ENCODE measurements at regions of chr5 and their contacts with region 1.

Region 1: GRCh38 chr5:75566710-75567309 is 44.4 kb upstream of the ANKDD1B start:
- DNase-seq: peak; percentile 84
- H3K4me3 Mint-ChIP-seq: peak overlapping the region; percentile 48
- H3K27ac Mint-ChIP-seq: peak overlapping the region; percentile 95
- H3K4me1 Mint-ChIP-seq: peaks cover 55% of the 10 kb centered on the region
- H3K27me3 Mint-ChIP-seq: no peaks in the 10 kb centered on the region

Region 2: DNA sequence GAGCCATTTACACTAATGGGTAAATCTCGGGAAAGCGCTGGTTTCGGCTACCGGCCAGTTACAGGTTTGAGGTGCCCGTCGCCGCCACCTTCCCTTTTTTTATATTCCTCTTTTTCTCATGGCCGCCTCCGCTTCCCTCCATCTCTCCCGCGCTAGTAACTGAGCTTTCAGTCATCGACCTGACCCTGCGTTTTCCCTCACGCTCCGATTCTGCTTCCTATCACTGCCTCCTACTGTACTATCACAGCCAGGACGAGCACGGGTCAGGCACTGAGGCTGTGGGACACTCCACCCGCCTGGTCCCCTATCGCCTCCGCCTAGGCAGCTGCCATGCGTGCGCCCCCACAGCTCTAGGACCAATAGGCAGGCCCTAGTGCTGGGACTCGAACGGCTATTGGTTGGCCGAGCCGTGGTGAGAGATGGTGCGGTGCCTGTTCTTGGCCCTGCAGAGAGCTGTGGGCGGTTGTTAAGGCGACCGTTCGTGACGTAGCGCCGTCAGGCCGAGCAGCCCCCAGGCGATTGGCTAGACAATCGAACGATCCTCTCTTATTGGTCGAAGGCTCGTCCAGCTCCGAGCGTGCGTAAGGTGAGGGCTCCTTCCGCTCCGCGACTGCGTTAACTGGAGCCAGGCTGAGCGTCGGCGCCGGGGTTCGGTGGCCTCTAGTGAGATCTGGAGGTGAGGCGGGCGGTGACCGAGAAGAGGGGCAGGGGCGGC is 230.0 kb before region 1 on chr5 and contains the start of gene HMGCR:
- CTCF ChIA-PET with region 1: no interaction called
- intact Hi-C with region 1: loop called (anchors 1 kb)
- DNase-seq: peak; percentile 99
- H3K4me3 Mint-ChIP-seq: no peak within 1 kb of the TSS
- H3K27ac Mint-ChIP-seq: no peak within 1 kb of the TSS
- H3K4me1 Mint-ChIP-seq: peaks cover 35% of the 10 kb centered on the region
- H3K27me3 Mint-ChIP-seq: no peaks in the 10 kb centered on the region
- total RNA-seq, gene HMGCR: 61.7 to 67.5 TPM

Region 3: GRCh38 chr5:75460942-75461610 is 105.7 kb before region 1 on chr5:
- CTCF ChIA-PET with region 1: no interaction called
- intact Hi-C with region 1: loop called (anchors 1 kb)
- DNase-seq: no peak
- H3K4me3 Mint-ChIP-seq: no peak overlapping the region
- H3K27ac Mint-ChIP-seq: no peak overlapping the region
- H3K4me1 Mint-ChIP-seq: peaks cover 33% of the 10 kb centered on the region
- H3K27me3 Mint-ChIP-seq: no peaks in the 10 kb centered on the region

Region 4: GRCh38 chr5:75668977-75669689 is 102.3 kb after region 1 on chr5:
- CTCF ChIA-PET with region 1: interaction called, 4 read pairs
- intact Hi-C with region 1: loop called (anchors 1 kb)
- DNase-seq: peak; percentile 82
- H3K4me3 Mint-ChIP-seq: peak overlapping the region; percentile 49
- H3K27ac Mint-ChIP-seq: peak overlapping the region; percentile 70
- H3K4me1 Mint-ChIP-seq: peaks cover 30% of the 10 kb centered on the region
- H3K27me3 Mint-ChIP-seq: no peaks in the 10 kb centered on the region

Region 5: DNA sequence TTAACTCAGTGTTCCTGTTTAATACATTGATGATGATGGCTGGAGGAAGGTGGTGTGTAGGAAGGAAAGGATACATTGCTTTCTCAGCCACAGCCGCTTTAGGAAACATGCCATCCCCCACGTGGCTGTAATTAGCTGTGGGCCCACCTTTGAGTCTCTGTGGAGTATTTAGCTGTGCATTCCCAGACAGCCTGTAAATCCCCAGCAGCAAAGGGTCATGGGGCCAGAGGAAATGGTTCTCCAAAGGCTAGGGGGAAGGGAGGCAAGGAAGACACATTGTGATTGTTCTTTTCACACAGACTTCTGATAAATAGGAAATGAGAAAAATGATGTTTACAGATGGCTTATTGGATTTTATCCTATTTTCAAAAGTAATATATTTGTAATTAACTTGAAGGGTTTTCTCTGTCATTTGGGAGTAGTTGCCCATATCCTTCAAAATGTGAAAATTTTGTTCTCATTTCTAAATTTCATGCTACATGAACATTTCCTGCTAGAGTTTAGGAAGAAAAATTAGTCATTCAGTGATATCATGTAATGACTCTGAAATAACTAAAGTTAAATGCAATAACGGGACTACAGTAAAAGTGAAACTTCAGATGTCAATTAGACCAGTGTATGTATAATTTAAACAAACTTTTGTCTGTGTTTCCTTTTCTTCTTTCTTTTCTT is 1124.8 kb after region 1 on chr5:
- CTCF ChIA-PET with region 1: no interaction called
- intact Hi-C with region 1: loop called (anchors 5 kb)
- DNase-seq: no peak
- H3K4me3 Mint-ChIP-seq: no peak overlapping the region
- H3K27ac Mint-ChIP-seq: peak overlapping the region; percentile 36
- H3K4me1 Mint-ChIP-seq: peaks cover 15% of the 10 kb centered on the region
- H3K27me3 Mint-ChIP-seq: no peaks in the 10 kb centered on the region

Measured in activated naive CD4-positive, alpha-beta T cell treated with anti-CD3 and anti-CD28 coated beads for 36 hours (primary cell).